Sciatic nerve (tissue), 2 donors: ENCODE measurements at regions of chr4 and their contacts with region 1.

Region 1: DNA sequence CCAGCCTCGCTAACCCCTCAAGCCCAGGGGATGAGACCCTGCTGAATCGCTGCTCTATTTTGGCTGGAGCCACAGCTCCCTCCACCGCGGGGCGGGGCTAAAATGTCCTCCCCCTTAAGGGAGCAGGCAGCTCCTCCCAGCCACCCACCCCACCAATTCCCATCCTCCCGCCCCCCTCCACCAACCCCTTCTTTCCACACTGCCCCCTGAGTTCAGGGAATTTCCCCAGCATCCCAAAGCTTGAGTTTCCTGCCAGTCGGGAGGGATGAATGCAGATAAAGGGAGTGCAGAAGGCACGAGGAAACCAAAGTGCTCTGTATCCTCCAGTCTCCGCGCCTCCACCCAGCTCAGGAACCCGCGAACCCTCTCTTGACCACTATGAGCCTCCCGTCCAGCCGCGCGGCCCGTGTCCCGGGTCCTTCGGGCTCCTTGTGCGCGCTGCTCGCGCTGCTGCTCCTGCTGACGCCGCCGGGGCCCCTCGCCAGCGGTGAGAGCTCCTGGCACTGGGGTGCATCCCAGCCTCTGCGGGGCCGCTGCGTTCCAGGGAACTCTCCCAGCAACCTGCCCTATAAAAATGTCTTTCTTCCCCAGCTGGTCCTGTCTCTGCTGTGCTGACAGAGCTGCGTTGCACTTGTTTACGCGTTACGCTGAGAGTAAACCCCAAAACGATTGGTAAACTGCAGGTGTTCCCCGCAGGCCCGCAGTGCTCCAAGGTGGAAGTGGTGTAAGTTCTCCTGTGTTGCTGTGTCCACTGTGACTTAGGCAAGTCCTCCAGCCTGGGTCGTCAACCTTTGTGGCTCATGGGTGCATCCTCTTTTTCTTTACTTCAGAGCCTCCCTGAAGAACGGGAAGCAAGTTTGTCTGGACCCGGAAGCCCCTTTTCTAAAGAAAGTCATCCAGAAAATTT is at the start of gene CXCL6:
- DNase-seq: peak; percentile 67
- ATAC-seq: peak; percentile 84
- total RNA-seq, gene CXCL6: 2.8 TPM

Region 2: DNA sequence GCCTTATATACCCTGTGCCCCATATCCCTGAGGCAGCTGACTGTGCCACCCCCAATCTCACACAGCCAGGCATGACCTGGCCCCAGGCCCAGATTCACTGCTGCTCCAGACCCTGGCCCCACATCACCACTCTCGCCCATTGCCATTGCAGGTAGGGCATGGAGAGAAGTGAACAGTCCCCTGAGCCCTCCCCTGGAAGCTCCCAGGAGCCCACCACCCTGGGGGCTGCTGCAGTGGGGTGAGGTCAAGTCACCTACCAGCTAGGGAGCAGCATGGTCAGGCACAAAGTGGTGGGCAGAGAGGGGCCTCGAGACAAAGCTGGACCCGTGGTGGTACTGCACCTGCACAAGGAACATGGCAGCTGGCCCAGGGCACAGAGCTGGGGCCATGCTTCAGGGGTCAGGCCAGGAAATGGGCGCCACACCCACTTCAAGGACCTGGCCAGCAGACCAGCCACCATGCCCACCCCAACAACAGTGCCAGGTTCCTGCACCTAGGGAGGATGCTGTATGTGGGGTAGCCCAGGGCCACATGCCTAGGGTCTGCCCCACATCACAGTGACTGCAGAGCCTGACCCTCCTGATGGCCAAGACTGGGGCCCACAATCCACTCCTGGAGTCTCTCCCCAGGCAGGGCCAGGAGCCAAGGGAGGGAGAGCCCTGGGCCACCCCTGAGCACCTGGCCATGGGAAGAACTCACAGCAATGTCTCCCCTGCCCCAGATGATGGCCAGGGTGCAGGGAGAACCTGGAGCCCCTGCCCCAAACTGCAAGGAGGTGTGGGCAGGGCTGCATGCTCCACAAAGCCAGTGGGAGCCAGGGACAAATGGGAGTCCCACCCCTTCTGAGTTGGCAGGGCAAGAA is 825.6 kb before region 1 on chr4:
- intact Hi-C with region 1: loop called (anchors 5 kb)
- DNase-seq: no peak
- ATAC-seq: peak; percentile 17

Region 3: GRCh38 chr4:73803213-73803612 is 33.4 kb before region 1 on chr4:
- intact Hi-C with region 1: no loop called
- DNase-seq: no peak
- ATAC-seq: no peak

Region 4: GRCh38 chr4:73869130-73870050 is 32.8 kb after region 1 on chr4 and contains the start of gene CXCL1:
- intact Hi-C with region 1: no loop called
- DNase-seq: peak; percentile 72
- ATAC-seq: peak; percentile 75
- total RNA-seq, gene CXCL1: 11.6 TPM